Motor neuron (in vitro differentiated cells): ENCODE measurements at regions of chr4 and their contacts with region 1.

Region 1: DNA sequence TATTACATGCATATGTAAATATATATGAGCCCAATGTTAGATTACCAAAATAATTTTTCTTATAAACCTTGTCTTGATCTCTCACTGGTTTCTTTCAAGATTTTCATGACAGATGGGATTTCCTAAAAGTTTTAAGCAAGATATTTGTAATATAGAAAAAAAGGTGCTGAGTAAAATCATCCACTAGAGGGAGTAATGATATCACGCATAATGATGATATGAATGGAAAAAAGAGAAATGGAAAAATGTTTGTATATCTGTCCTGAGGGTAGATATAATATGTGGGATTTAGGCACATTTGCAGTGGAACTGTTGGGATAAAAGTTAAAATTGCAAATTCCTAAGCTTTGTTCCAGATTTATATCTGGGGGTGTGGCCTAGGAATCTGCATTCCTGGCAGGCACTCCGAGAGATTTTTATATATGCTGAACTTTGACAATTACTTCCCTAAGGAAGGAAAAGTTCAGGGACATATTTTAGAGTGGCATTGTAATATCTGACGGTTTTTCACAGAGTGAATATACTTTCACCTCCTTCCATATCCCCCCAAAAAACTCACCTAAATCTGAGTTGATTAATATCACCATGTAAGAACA is 60.5 kb downstream of the TMA16 start:
- ATAC-seq: no peak
- H3K4me3 ChIP-seq: no peak overlapping the region
- H3K27ac ChIP-seq: no peak overlapping the region
- H3K4me1 ChIP-seq: no peaks in the 10 kb centered on the region

Region 2: DNA sequence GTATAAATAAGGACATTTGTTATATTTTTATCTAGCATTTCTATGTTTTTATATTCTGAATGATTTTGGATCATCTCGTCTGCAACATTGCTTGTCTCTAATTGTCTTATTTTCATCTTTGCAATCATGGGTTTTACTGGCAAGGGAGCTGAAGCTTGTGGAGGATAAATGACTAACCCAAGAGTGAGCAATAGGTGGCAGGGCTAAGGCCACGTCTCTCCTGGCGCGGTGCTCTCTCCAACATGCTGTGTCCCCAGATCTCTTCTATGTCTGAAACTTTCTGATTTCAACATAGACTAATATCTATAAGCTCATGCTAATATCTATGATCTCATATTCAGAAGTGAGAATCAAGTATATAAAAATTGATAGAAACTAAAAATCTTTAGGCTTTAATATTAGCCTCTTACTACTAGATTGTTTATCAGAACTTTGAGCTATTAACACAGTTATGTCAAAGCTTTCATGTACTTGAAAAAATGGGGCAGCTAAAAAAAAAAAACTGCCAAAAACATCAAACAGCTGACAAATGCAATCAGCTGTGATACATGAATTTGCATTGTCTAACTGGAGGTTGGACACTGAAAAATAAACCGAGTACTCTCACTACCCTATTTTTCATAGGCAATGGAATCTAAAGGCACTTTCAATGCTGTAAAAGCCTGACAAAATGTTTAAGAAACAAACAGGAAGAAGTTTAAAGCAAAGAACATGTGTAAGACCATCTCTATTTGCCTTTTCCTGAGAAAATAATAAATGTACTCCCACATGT is 108.7 kb after region 1 on chr4:
- in situ Hi-C with region 1: loop called in 1 of 9 experiments (anchors 10 kb)
- ATAC-seq: no peak
- H3K4me3 ChIP-seq: no peak overlapping the region
- H3K27ac ChIP-seq: no peak overlapping the region
- H3K4me1 ChIP-seq: no peaks in the 10 kb centered on the region

Region 3: DNA sequence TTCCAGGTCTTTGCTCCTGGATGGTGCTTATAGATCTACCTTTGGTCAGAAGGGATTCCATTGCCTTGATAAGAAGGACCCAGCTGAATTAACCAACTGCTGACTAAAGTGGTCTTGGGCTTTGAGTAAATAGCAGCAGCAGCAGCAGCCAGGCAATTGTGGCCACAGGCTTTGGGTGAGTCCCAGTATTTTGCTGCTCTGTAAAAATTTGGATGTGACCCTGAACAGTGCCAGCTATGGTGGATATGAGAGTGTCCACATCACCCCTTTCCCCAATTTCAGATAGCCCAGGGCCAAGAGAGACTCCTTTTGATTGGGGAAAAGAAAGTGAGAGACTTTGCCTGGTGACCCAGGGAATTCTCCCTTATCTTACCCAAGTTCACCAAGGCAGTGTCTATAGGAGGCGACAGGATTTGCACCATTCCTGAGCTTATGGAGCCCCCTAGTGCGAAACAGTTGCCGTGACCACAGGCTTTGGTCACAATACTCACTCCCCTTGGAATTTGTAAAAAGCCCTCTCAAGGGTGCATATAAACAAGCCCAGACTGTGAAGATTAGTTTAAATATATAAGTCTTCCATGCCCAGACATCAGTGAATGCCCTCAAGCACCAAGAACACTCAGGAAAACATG is 457.5 kb after region 1 on chr4:
- in situ Hi-C with region 1: loop called in 3 of 9 experiments (anchors 10 to 25 kb)
- ATAC-seq: peak in 5 of 8 experiments; percentile 44 to 100 (median 76)
- H3K4me3 ChIP-seq: no peak overlapping the region
- H3K27ac ChIP-seq: no peak overlapping the region
- H3K4me1 ChIP-seq: no peaks in the 10 kb centered on the region

Region 4: GRCh38 chr4:164725066-164725465 is 1170.1 kb after region 1 on chr4:
- in situ Hi-C with region 1: loop called in 4 of 9 experiments (anchors 10 to 25 kb)
- ATAC-seq: no peak
- H3K4me3 ChIP-seq: no peak overlapping the region
- H3K27ac ChIP-seq: no peak overlapping the region
- H3K4me1 ChIP-seq: no peaks in the 10 kb centered on the region